Calu3 (cell line): ENCODE measurements at regions of chr16 and their contacts with region 1.

Region 1: GRCh38 chr16:19094541-19095365 is 19.0 kb upstream of the ITPRIPL2 start:
- DNase-seq: peak; percentile 32
- H3K4me3 Mint-ChIP-seq: no peak overlapping the region
- H3K27ac Mint-ChIP-seq: peak overlapping the region; percentile 19
- H3K4me1 Mint-ChIP-seq: peaks cover 41% of the 10 kb centered on the region
- H3K27me3 Mint-ChIP-seq: no peaks in the 10 kb centered on the region
- CTCF ChIP-seq: no peak

Region 2: GRCh38 chr16:18789850-18790724 is 304.7 kb before region 1 on chr16 and contains the start of gene RPS15A:
- CTCF ChIA-PET with region 1: interaction called, 10 read pairs
- intact Hi-C with region 1: no loop called
- DNase-seq: peak; percentile 97
- H3K4me3 Mint-ChIP-seq: peak within 1 kb of the TSS; percentile 96
- H3K27ac Mint-ChIP-seq: peak within 1 kb of the TSS; percentile 98
- H3K4me1 Mint-ChIP-seq: peaks cover 43% of the 10 kb centered on the region
- H3K27me3 Mint-ChIP-seq: no peaks in the 10 kb centered on the region
- CTCF ChIP-seq: no peak
- total RNA-seq, gene RPS15A: 1,182 and 1,352 TPM in 2 replicates

Region 3: DNA sequence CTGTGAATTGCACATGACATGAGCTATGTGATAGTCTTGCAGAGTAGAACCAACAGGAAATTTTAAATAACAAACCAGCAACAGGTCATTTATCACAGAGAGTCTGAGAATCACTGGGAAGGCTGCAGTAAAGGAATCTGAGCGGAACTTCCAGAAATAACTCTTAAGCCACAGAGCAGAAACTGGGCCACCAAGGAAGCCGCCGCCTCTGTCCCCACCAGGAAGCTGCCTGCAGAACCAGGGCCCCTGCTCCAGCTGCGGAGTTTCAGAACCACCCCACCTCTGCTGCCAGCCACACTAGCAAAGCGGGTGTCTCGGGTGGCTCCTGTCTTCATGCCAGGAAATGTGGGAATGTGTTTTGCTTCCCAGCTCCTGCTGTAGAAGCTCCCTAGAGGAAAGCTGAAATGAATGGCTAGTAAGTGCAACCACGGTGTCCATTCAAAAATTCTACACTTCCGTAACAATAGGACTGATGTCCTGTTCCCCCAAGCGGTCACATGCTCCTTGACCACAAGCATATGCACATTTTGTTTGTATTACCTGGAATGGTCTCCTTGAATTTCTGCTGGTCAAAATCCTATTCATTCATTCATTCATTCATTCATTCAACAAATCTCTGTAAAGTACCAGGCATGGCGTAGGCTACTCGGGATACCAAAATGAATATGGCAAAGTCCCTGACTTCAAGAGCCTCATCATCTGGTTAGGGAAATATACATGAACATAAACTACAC is 11.3 kb after region 1 on chr16:
- CTCF ChIA-PET with region 1: interaction called, 40 read pairs
- intact Hi-C with region 1: loop called (anchors 1 kb)
- DNase-seq: no peak
- H3K4me3 Mint-ChIP-seq: no peak overlapping the region
- H3K27ac Mint-ChIP-seq: no peak overlapping the region
- H3K4me1 Mint-ChIP-seq: peaks cover 32% of the 10 kb centered on the region
- H3K27me3 Mint-ChIP-seq: no peaks in the 10 kb centered on the region
- CTCF ChIP-seq: no peak

Region 4: DNA sequence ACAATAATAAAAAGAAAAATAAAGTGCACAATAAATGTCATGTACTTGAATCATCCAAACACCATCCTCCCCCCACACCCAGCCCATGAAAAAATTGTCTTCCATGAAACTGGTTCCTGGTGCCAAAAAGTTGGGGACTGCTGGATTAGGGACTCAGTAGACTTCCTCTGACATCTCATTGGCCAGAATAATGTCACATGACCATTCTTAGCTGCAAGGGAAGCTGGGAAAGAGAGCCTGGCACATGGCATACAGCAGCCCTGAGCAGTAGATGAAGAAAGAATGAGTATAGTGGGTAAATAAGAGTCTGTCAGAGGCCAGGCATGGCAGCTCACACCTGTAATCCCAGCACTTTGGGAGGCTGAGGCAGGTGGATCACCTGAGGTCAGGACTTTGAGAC is 31.5 kb after region 1 on chr16:
- CTCF ChIA-PET with region 1: no interaction called
- intact Hi-C with region 1: no loop called
- DNase-seq: no peak
- H3K4me3 Mint-ChIP-seq: no peak overlapping the region
- H3K27ac Mint-ChIP-seq: no peak overlapping the region
- H3K4me1 Mint-ChIP-seq: peaks cover 23% of the 10 kb centered on the region
- H3K27me3 Mint-ChIP-seq: no peaks in the 10 kb centered on the region
- CTCF ChIP-seq: no peak

Region 5: DNA sequence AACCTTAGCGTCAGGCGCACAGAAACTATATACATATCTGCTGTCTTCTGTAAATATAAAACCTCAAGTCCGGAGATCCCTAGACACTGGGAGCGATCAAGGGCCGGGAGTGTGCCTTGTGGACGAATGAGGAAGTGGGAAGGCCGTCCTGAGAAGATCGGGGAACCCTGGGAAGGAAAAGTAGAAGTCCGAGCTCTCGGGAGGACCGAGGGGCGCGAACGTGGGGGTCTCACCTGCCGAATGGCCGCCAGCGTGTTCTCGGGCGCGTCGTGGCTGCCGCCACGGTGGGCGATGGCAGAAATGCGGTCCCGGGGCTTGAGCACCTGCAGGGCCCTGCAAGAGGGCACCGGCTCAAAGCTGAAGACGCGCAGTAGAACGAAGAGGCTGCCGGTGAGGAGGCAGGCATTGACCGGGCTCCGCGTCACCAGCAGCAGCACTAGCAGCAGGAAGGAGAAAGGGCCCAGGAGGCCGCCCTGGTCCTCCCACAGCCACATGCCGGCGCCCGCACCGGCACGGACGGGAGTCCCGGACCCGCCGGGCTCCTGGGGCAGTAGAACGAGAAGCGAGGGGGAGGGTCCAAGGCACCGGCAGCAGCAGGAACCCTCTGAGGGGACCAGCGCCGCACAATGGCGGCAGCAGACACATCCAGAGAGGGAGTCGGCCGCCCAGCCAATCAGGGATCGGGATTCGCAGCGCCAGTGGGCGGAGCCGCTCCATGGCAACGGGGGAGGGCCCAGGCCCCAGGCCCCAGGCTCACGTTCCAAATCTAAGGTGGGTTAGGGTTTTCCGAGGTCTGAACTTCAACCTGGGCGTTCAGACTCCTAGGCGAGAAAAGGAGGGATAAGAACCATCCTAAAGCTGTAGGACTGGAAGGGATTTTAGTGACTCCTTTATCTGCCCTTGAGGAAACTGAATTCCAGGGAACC is 427.0 kb after region 1 on chr16 and contains the start of gene GDE1:
- CTCF ChIA-PET with region 1: no interaction called
- intact Hi-C with region 1: loop called (anchors 10 kb)
- DNase-seq: peak; percentile 97
- H3K4me3 Mint-ChIP-seq: peak within 1 kb of the TSS; percentile 94
- H3K27ac Mint-ChIP-seq: peak within 1 kb of the TSS; percentile 82
- H3K4me1 Mint-ChIP-seq: peaks cover 37% of the 10 kb centered on the region
- H3K27me3 Mint-ChIP-seq: no peaks in the 10 kb centered on the region
- CTCF ChIP-seq: no peak
- total RNA-seq, gene GDE1: 89.6 and 98.2 TPM in 2 replicates

Region 6: DNA sequence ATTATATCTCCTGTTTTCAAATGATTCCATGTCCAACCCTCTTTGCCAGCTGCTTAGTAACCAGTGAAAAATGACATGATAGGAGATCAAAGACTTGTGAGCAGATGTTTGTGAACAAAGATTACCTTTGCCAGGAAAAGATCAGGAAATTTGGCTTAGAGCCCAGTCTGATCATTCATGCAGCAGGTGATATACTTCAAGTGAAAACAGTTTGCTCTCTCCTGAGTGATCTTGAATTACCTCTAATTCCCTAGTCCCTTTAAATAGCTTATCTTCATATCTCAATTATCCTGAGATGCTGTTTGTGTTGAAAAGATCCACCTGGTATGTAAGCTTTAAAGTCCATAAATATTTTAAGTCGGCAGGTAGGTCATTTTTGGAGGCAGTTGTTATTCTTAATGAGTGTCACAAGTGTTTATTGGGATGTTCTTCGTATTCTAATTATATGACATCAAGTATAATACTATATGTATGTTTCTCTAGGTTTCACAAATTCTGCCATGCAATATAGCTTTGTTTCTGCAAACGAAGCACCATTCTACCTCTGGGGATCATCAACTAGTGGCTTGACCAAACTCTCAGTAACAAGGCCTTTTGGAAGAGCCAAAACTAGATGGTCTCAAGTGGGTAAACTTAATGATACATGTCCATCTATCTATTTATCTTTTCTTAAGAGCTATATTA is 447.5 kb after region 1 on chr16:
- CTCF ChIA-PET with region 1: no interaction called
- intact Hi-C with region 1: no loop called
- DNase-seq: no peak
- H3K4me3 Mint-ChIP-seq: no peak overlapping the region
- H3K27ac Mint-ChIP-seq: no peak overlapping the region
- H3K4me1 Mint-ChIP-seq: peaks cover 8% of the 10 kb centered on the region
- H3K27me3 Mint-ChIP-seq: no peaks in the 10 kb centered on the region
- CTCF ChIP-seq: no peak